ENCODE measurements at regions of chr9 and their contacts with region 1.

Region 1: GRCh38 chr9:136482793-136483588 is at the start of gene SEC16A:
- DNase-seq: peak; percentile 96
- H3K4me3 ChIP-seq: peak within 1 kb of the TSS; percentile 63 to 94 (median 88)
- H3K27ac ChIP-seq: peak within 1 kb of the TSS; percentile 91
- H3K4me1 ChIP-seq: peaks cover 16% of the 10 kb centered on the region
- H3K27me3 ChIP-seq: no peaks in the 10 kb centered on the region
- CTCF ChIP-seq: no peak
- POLR2A ChIP-seq: peak; percentile 90
- total RNA-seq, gene SEC16A: 76.7 and 80.6 TPM in 2 replicates

Region 2: DNA sequence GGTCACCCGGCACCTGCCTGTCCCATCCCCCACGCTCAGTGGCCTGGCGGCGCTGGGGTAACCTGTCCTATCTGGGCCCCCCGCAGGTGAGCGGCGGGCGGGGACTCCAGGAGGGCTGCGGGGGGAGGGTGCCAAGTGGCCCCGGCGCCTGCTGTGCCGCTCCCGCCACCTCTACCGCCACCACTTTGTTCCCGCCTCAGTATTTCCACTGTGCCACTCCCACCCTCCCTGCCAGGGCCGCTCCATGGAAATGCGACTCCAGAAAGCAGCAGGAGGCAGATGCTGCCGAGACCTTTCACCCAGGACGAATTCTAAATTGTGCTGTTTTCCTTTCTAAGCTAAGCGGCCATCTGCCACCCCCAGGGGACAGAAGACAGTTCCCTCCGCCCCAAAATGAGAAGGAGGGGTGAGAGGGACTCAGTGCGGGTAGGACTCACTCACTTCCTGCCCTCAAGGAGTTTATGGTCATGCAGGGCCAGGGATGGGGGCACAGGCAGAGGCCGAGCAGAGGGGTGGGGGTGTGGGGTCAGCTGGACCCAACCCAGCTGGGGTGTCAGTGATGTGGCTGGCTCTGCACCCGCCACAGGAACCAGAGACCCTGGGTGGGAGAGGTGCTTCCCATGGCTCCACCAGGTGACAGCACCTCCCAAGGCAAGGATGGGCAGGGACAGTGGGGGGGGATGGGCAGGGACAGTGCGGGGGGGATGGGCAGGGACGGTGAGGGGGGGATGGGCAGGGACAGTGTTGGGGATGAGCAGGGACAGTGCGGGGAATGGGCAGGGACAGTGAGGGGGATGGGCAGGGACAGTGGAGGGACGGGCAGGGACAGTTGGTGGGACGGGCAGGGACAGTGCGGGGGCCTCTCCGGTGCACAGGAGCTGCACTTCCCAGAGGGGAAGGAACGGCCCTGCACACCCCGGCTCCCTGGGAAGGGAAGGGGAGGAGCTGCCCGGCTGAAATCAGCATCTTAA is 45.0 kb after region 1 on chr9:
- CTCF ChIA-PET with region 1: interaction called, 11 read pairs
- POLR2A ChIA-PET with region 1: no interaction called
- dilution Hi-C with region 1: no loop called
- intact Hi-C with region 1: no loop called
- DNase-seq: no peak
- H3K4me3 ChIP-seq: no peak overlapping the region
- H3K27ac ChIP-seq: peak overlapping the region; percentile 89
- H3K4me1 ChIP-seq: peaks cover 45% of the 10 kb centered on the region
- H3K27me3 ChIP-seq: no peaks in the 10 kb centered on the region
- CTCF ChIP-seq: no peak
- POLR2A ChIP-seq: no peak

Region 3: GRCh38 chr9:136551401-136552116 is 68.6 kb after region 1 on chr9:
- CTCF ChIA-PET with region 1: no interaction called
- POLR2A ChIA-PET with region 1: no interaction called
- dilution Hi-C with region 1: loop called (anchors 10 kb)
- intact Hi-C with region 1: no loop called
- DNase-seq: peak; percentile 56
- H3K4me3 ChIP-seq: no peak overlapping the region
- H3K27ac ChIP-seq: peak overlapping the region; percentile 15
- H3K4me1 ChIP-seq: peaks cover 17% of the 10 kb centered on the region
- H3K27me3 ChIP-seq: no peaks in the 10 kb centered on the region
- CTCF ChIP-seq: no peak
- POLR2A ChIP-seq: no peak

Region 4: DNA sequence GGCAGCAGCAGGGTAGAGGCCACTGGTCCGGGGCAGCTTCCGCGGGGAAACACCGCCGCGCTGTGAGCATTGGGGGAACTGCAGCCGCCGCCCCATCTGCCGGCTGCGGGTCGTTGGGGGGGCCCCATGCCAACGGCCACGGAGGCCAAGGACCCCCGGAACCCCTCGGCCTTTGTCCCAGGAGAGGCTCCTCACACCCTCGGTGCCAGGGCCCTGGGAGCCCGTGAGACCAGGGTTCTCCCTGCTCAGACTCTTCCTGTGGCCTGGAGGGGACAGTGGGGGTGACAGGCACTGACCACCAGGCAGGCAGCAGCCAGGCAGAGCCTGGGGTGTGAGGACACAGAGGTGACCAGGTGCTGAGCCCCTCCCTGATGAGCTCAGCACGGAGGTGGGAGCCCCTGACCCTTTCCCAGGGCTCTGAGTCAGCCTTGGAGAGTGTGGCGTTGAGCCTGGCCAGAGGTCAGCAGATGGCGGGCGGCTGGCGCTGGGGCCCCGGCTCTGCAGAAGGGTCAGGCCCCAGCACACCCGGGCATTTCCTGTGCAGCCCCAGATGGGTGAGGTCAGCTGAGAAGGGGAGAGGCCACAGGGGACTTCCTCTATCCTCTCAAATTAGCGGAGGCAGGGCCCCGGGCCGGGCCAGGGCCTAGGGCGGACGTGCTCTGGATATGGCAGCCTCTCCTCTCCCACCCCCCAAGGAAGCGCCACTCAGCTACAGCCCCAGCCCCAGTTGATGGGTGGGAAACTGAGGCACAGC is 161.8 kb after region 1 on chr9:
- CTCF ChIA-PET with region 1: interaction called, 29 read pairs
- POLR2A ChIA-PET with region 1: interaction called, 4 read pairs
- dilution Hi-C with region 1: no loop called
- intact Hi-C with region 1: loop called (anchors 1 kb)
- DNase-seq: peak; percentile 88
- H3K4me3 ChIP-seq: peak overlapping the region in 1 of 3 experiments; percentile 47
- H3K27ac ChIP-seq: peak overlapping the region; percentile 98
- H3K4me1 ChIP-seq: peaks cover 72% of the 10 kb centered on the region
- H3K27me3 ChIP-seq: no peaks in the 10 kb centered on the region
- CTCF ChIP-seq: peak; percentile 95 to 96
- POLR2A ChIP-seq: peak; percentile 72

Region 5: GRCh38 chr9:136654820-136655535 is 172.0 kb after region 1 on chr9:
- CTCF ChIA-PET with region 1: no interaction called
- POLR2A ChIA-PET with region 1: no interaction called
- dilution Hi-C with region 1: no loop called
- intact Hi-C with region 1: no loop called
- DNase-seq: peak; percentile 14
- H3K4me3 ChIP-seq: no peak overlapping the region
- H3K27ac ChIP-seq: peak overlapping the region; percentile 98
- H3K4me1 ChIP-seq: peaks cover 56% of the 10 kb centered on the region
- H3K27me3 ChIP-seq: no peaks in the 10 kb centered on the region
- CTCF ChIP-seq: no peak
- POLR2A ChIP-seq: no peak

Region 6: GRCh38 chr9:136665111-136665703 is 182.2 kb after region 1 on chr9:
- CTCF ChIA-PET with region 1: no interaction called
- POLR2A ChIA-PET with region 1: no interaction called
- dilution Hi-C with region 1: no loop called
- intact Hi-C with region 1: no loop called
- DNase-seq: peak; percentile 28
- H3K4me3 ChIP-seq: peak overlapping the region; percentile 83 to 93 (median 90)
- H3K27ac ChIP-seq: peak overlapping the region; percentile 85
- H3K4me1 ChIP-seq: peaks cover 33% of the 10 kb centered on the region
- H3K27me3 ChIP-seq: no peaks in the 10 kb centered on the region
- CTCF ChIP-seq: peak; percentile 23 to 28
- POLR2A ChIP-seq: peak; percentile 95

Region 7: DNA sequence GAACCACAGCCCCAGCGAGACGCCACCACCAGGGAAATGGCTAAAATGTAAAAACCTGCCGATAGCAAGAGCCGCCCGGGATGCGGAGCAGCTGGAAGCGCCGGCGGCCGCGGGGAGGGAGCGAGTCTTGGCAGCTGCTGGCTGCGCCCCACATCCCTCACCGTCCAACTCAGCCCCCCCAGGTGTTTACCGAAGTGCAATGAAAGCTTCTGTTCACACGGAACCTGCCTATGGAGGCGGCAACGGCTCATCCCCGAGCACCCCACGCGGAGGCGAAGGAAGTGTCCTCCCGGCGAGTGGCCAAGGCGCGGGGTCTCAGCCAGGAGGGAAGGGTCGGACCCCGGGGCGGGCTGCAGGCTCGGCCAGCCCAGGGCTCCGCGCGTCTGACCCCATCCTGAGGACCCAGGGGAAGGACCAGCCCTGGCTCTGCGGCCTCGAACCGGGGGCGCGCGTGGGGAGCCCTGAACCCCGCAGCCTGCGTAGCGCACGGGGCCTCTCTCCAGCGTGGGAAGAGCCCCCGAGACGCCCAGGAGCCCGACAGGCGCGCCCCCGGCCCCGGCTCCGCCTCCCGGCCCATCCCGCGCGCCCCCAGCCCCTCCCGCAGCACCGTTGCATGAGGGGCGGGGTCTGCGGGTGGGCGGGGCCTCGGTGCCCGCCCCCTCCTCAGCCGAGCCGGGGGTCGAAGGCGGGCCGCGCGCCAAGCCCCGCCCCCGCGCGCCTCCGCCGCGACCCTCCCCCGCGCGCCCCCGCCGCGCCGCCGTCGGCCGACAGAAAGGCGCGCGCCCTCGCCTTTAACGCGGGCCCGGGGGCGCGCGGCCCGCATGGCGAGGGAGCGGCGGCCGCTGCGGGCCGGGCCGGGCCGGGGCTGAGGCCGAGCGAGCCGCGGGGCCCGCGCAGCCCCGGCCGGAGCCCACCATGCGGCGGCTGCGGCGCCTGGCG is 229.0 kb after region 1 on chr9 and contains the start of gene DIPK1B:
- CTCF ChIA-PET with region 1: no interaction called
- POLR2A ChIA-PET with region 1: no interaction called
- dilution Hi-C with region 1: no loop called
- intact Hi-C with region 1: loop called (anchors 5 kb)
- DNase-seq: peak; percentile 48
- H3K4me3 ChIP-seq: peak within 1 kb of the TSS; percentile 68 to 81 (median 75)
- H3K27ac ChIP-seq: peak within 1 kb of the TSS; percentile 96
- H3K4me1 ChIP-seq: peaks cover 27% of the 10 kb centered on the region
- H3K27me3 ChIP-seq: no peaks in the 10 kb centered on the region
- CTCF ChIP-seq: no peak
- POLR2A ChIP-seq: no peak
- total RNA-seq, gene DIPK1B: 242 and 253 TPM in 2 replicates